GM12878 (cell line): ENCODE measurements at regions of chr2 and their contacts with region 1.

Region 1: GRCh38 chr2:231612179-231613053 is 19.8 kb downstream of the TEX44 start:
- DNase-seq: peak; percentile 75
- ATAC-seq: peak; percentile 68
- H3K4me3 ChIP-seq: peak overlapping the region; percentile 78; the same call in 1 of the 2 replicates
- H3K27ac ChIP-seq: peak overlapping the region; percentile 99
- H3K4me1 ChIP-seq: peaks cover 29% of the 10 kb centered on the region
- H3K27me3 ChIP-seq: no peaks in the 10 kb centered on the region
- CTCF ChIP-seq: peak; percentile 93 to 96 (median 94)
- EP300 ChIP-seq: peak in 1 of 2 experiments; percentile 26; a peak in 1 of 4 replicates
- POLR2A ChIP-seq: 0 out of 2 replicates have a peak, but pooled peaks have one; percentile 26
- RAD21 ChIP-seq: peak; percentile 96

Region 2: DNA sequence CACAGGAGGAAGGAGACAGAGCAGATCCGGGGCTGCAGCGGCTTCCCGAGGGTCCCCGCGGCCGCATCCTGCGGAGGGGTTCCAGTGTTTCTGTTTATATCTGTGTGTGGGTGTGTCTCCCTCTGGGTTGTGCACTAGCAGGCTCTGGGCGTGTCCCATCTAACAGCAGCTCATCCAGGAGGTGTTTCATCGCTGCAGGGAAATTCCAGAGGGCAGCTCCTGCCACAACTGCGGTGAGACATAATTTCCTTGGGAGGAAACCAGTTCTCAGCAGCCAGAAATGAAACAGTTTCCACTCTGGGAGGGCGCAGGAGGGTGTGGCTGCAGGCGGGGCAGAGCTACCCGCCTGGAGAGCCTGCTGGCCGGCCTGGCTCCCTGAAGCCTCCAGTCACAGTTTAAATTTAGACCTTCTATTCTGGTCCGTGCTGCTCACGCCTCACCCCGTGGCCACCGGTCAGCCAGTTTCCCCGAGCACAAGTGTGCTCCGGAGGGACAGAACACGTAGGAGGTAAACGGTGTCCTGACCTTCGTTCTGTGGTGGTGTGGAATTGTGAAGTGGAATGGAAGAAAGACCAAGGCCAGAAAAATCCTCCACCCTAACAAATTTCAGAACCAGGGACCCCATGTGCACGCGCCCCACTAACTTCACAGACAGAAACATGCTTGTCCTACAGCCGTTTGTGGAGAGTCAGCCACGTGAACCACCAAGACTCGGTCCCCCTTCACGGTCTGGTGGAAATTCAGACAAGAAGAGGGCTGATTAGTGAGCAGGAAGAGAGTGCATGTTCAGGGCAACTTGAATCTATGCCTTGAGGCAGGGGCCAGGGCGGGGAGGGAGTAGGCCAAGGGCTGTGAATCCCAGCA is 30.4 kb after region 1 on chr2:
- CTCF ChIA-PET with region 1: interaction called, 24 read pairs
- POLR2A ChIA-PET with region 1: interaction called, 7 read pairs
- RAD21 ChIA-PET with region 1: interaction called, 14 read pairs
- SMC1A ChIA-PET with region 1: interaction called, 7 read pairs
- in situ Hi-C with region 1: no loop called
- intact Hi-C with region 1: loop called (anchors 2 kb)
- DNase-seq: peak; percentile 63
- ATAC-seq: peak; percentile 90
- H3K4me3 ChIP-seq: peak overlapping the region; percentile 63; the same call in 1 of the 2 replicates
- H3K27ac ChIP-seq: peak overlapping the region; percentile 56
- H3K4me1 ChIP-seq: peaks cover 14% of the 10 kb centered on the region
- H3K27me3 ChIP-seq: no peaks in the 10 kb centered on the region
- CTCF ChIP-seq: no peak
- EP300 ChIP-seq: no peak
- POLR2A ChIP-seq: no peak
- RAD21 ChIP-seq: no peak

Region 3: DNA sequence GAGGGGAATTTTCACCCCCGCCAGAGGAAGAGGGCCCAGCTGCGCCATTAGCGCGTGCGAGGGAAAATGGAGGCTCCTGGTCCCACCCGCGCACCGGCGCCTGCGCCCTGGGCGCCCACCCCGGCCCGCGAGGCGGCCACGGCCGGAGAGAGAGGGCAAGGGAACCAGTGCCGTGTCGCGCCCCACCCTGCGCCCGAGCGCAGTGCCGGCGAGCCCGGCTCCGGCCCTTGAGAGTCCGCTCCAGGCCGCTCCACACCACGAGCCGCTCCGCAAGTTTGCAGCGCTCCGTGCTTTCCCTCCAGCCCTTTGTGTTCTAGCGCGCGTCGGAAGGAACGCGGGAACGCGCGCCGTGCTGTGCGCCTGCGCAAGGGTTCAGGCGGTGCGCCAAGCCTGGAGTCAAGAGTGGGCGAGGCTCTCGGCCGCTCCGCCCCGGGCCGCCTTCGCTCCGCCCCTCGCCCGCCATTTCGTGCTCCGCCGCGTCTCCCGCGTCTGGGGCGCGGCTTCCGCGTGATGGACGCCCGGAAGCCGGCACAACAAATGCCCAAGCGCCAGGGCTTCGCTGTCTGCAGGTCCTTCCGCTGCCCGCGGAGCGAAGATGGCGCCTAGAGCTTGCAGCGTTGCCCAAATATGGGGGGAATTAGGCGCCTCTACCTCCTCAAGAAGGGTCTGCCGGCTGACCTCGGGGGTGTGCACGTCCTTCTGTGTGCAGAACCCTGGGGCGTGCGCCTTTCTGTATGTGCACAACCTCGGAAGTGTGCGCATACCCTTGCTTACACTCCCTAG is 49.8 kb after region 1 on chr2:
- CTCF ChIA-PET with region 1: interaction called, 47 read pairs
- POLR2A ChIA-PET with region 1: interaction called, 119 read pairs
- RAD21 ChIA-PET with region 1: interaction called, 70 read pairs
- SMC1A ChIA-PET with region 1: interaction called, 5 read pairs
- in situ Hi-C with region 1: no loop called
- intact Hi-C with region 1: loop called (anchors 1 kb)
- DNase-seq: peak; percentile 95
- ATAC-seq: peak; percentile 77
- H3K4me3 ChIP-seq: peak overlapping the region; percentile 56; the same call in 1 of the 2 replicates
- H3K27ac ChIP-seq: peak overlapping the region; percentile 92
- H3K4me1 ChIP-seq: peaks cover 36% of the 10 kb centered on the region
- H3K27me3 ChIP-seq: no peaks in the 10 kb centered on the region
- CTCF ChIP-seq: no peak
- EP300 ChIP-seq: peak; percentile 10 to 53; a peak in 1 of 4 replicates
- POLR2A ChIP-seq: peak; percentile 85
- RAD21 ChIP-seq: 0 out of 2 replicates have a peak, but pooled peaks have one; percentile 7

Region 4: GRCh38 chr2:231687133-231687852 is 74.9 kb after region 1 on chr2:
- CTCF ChIA-PET with region 1: interaction called, 13 read pairs
- POLR2A ChIA-PET with region 1: no interaction called
- RAD21 ChIA-PET with region 1: interaction called, 4 read pairs
- SMC1A ChIA-PET with region 1: no interaction called
- in situ Hi-C with region 1: no loop called
- intact Hi-C with region 1: no loop called
- DNase-seq: no peak
- ATAC-seq: peak; percentile 97
- H3K4me3 ChIP-seq: peak overlapping the region; percentile 28; the same call in 1 of the 2 replicates
- H3K27ac ChIP-seq: peak overlapping the region; percentile 38; the same call in 1 of the 2 replicates
- H3K4me1 ChIP-seq: peaks cover 4% of the 10 kb centered on the region
- H3K27me3 ChIP-seq: no peaks in the 10 kb centered on the region
- CTCF ChIP-seq: peak; percentile 88 to 94 (median 90)
- EP300 ChIP-seq: no peak
- POLR2A ChIP-seq: peak; percentile 57
- RAD21 ChIP-seq: peak; percentile 65

Region 5: GRCh38 chr2:231780909-231781797 is 168.7 kb after region 1 on chr2 and contains the start of gene PDE6D:
- CTCF ChIA-PET with region 1: interaction called, 6 read pairs
- POLR2A ChIA-PET with region 1: interaction called, 4 read pairs
- RAD21 ChIA-PET with region 1: interaction called, 9 read pairs
- SMC1A ChIA-PET with region 1: interaction called, 4 read pairs
- in situ Hi-C with region 1: no loop called
- intact Hi-C with region 1: loop called (anchors 1 kb)
- DNase-seq: peak; percentile 97
- ATAC-seq: peak; percentile 94
- H3K4me3 ChIP-seq: peak within 1 kb of the TSS; percentile 91
- H3K27ac ChIP-seq: peak within 1 kb of the TSS; percentile 78
- H3K4me1 ChIP-seq: peaks cover 10% of the 10 kb centered on the region
- H3K27me3 ChIP-seq: no peaks in the 10 kb centered on the region
- CTCF ChIP-seq: no peak
- EP300 ChIP-seq: peak; percentile 22 to 55; a peak in 2 of 4 replicates
- POLR2A ChIP-seq: peak; percentile 93
- RAD21 ChIP-seq: no peak
- polyA plus RNA-seq, gene PDE6D: 8.2 to 15.9 TPM